Dendritic cell treated with granulocyte-macrophage colony-stimulating factor and Interleukin-4, amounts not matched to agents 40 ng/mL and 50 ng/mL, for 4 days (primary cell): ENCODE measurements at regions of chr6 and their contacts with region 1.

Region 1: DNA sequence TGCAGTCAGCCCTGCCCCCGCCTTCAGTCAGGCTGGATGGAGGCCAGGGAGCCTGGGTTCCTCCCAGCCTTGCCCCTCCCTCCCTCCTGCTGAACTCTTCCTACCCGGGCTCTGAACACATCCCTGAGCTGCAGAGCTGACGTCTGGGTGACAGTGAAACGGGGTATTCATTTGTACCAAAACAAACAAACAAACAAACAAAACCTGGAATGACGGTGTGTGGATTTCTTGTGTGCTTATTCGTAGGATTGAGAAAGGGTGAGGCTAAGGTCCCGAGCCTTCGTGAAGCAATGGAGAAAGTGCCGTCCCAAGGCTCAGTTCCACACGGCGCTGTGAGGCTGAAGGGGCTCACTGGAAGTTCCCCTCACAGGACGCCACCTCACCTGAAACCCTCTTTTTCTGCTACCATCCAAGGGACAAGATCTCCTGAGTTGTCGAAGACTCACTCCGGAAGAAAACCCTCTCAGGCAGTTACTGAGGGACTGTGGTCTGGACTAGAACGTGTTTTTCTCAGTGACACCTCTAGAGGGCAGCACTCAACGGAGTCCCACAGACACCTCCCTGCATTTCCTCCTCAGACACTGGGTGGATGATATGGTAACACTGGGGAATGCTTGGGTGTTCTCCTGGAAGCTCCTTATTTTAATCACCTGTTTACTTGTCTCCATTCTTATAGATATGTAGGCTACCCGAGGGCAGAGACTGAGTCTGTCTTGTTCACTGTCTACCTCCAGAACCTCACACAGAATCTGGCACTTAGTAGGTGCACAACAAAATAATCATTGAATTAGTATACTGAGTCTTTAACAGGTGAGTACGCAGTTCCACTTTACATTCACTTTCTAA is 27.3 kb downstream of the GSTA3 start:
- H3K4me3 Mint-ChIP-seq: peak overlapping the region; percentile 73
- H3K27ac Mint-ChIP-seq: peak overlapping the region; percentile 65
- H3K4me1 Mint-ChIP-seq: no peaks in the 10 kb centered on the region
- H3K27me3 Mint-ChIP-seq: no peaks in the 10 kb centered on the region

Region 2: GRCh38 chr6:52964318-52964717 is 82.1 kb after region 1 on chr6:
- intact Hi-C with region 1: no loop called
- H3K4me3 Mint-ChIP-seq: no peak overlapping the region
- H3K27ac Mint-ChIP-seq: no peak overlapping the region
- H3K4me1 Mint-ChIP-seq: no peaks in the 10 kb centered on the region
- H3K27me3 Mint-ChIP-seq: no peaks in the 10 kb centered on the region

Region 3: GRCh38 chr6:52976591-52977035 is 94.4 kb after region 1 on chr6:
- intact Hi-C with region 1: loop called (anchors 10 kb)
- H3K4me3 Mint-ChIP-seq: no peak overlapping the region
- H3K27ac Mint-ChIP-seq: peak overlapping the region; percentile 74
- H3K4me1 Mint-ChIP-seq: peaks cover 24% of the 10 kb centered on the region
- H3K27me3 Mint-ChIP-seq: peaks cover 2% of the 10 kb centered on the region